ENCODE measurements at regions of chr18 and their contacts with region 1.

Region 1: GRCh38 chr18:63476666-63477065 is at the start of gene SERPINB5:
- DNase-seq: peak; percentile 99
- H3K4me3 Mint-ChIP-seq: peak within 1 kb of the TSS; percentile 95
- H3K27ac Mint-ChIP-seq: peak within 1 kb of the TSS; percentile 99
- H3K4me1 Mint-ChIP-seq: peaks cover 34% of the 10 kb centered on the region
- H3K27me3 Mint-ChIP-seq: no peaks in the 10 kb centered on the region
- CTCF ChIP-seq: no peak
- total RNA-seq, gene SERPINB5: 254 and 330 TPM in 2 replicates

Region 2: GRCh38 chr18:63249771-63250170 is 226.9 kb before region 1 on chr18:
- CTCF ChIA-PET with region 1: no interaction called
- POLR2A ChIA-PET with region 1: no interaction called
- intact Hi-C with region 1: no loop called
- DNase-seq: no peak
- H3K4me3 Mint-ChIP-seq: no peak overlapping the region
- H3K27ac Mint-ChIP-seq: no peak overlapping the region
- H3K4me1 Mint-ChIP-seq: no peaks in the 10 kb centered on the region
- H3K27me3 Mint-ChIP-seq: no peaks in the 10 kb centered on the region
- CTCF ChIP-seq: no peak

Region 3: DNA sequence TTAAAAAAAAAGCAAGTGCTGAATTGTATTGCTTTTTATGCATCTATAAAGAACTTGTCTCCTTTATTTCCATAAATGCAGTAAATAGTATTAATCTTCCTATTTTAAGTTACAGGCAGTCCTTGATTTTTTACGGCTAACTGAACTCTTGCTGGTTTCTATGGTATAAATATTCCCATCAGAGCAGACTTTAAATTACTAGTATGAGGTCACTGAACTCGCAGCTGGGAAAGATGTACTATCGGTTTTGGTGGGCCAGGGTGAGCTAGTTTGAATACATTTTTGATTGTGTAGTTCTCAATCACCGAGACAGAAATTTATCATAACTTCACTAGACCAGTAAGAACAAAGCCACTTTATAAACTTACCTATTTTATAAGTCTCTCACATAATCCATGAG is 88.8 kb before region 1 on chr18:
- CTCF ChIA-PET with region 1: no interaction called
- POLR2A ChIA-PET with region 1: no interaction called
- intact Hi-C with region 1: no loop called
- DNase-seq: no peak
- H3K4me3 Mint-ChIP-seq: no peak overlapping the region
- H3K27ac Mint-ChIP-seq: no peak overlapping the region
- H3K4me1 Mint-ChIP-seq: no peaks in the 10 kb centered on the region
- H3K27me3 Mint-ChIP-seq: no peaks in the 10 kb centered on the region
- CTCF ChIP-seq: no peak

Region 4: DNA sequence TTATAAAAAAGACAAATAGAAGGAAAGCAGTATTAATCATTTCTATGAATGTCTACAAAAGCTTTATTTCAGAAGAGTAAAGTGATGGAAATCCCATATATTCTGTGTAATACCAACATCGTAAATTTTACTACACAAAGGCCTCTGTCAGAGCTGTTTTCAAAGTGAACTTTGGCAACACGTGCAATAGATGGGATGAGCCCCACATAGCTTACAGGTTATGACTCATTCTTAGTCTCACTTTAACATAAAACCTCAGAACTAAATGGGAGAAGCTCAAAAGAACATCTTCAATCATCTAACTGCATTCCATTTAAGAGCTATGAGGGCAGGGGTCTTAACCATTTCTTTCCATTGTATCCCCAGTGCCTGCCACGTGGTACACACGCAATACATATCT is 65.9 kb before region 1 on chr18:
- CTCF ChIA-PET with region 1: no interaction called
- POLR2A ChIA-PET with region 1: interaction called, 10 read pairs
- intact Hi-C with region 1: loop called (anchors 2 kb)
- DNase-seq: peak; percentile 74
- H3K4me3 Mint-ChIP-seq: no peak overlapping the region
- H3K27ac Mint-ChIP-seq: peak overlapping the region; percentile 57
- H3K4me1 Mint-ChIP-seq: peaks cover 25% of the 10 kb centered on the region
- H3K27me3 Mint-ChIP-seq: no peaks in the 10 kb centered on the region
- CTCF ChIP-seq: no peak

Region 5: GRCh38 chr18:63444567-63444966 is 32.1 kb before region 1 on chr18:
- CTCF ChIA-PET with region 1: interaction called, 47 read pairs
- POLR2A ChIA-PET with region 1: interaction called, 863 read pairs
- intact Hi-C with region 1: loop called (anchors 1 kb)
- DNase-seq: peak; percentile 95
- H3K4me3 Mint-ChIP-seq: peak overlapping the region; percentile 46
- H3K27ac Mint-ChIP-seq: peak overlapping the region; percentile 74
- H3K4me1 Mint-ChIP-seq: peaks cover 40% of the 10 kb centered on the region
- H3K27me3 Mint-ChIP-seq: no peaks in the 10 kb centered on the region
- CTCF ChIP-seq: no peak

Region 6: GRCh38 chr18:63457987-63458386 is 18.7 kb before region 1 on chr18:
- CTCF ChIA-PET with region 1: interaction called, 4 read pairs
- POLR2A ChIA-PET with region 1: interaction called, 151 read pairs
- intact Hi-C with region 1: no loop called
- DNase-seq: no peak
- H3K4me3 Mint-ChIP-seq: no peak overlapping the region
- H3K27ac Mint-ChIP-seq: no peak overlapping the region
- H3K4me1 Mint-ChIP-seq: peaks cover 27% of the 10 kb centered on the region
- H3K27me3 Mint-ChIP-seq: no peaks in the 10 kb centered on the region
- CTCF ChIP-seq: no peak

Region 7: GRCh38 chr18:63505566-63506335 is 29.1 kb after region 1 on chr18:
- CTCF ChIA-PET with region 1: interaction called, 4 read pairs
- POLR2A ChIA-PET with region 1: interaction called, 35 read pairs
- intact Hi-C with region 1: no loop called
- DNase-seq: peak; percentile 72
- H3K4me3 Mint-ChIP-seq: no peak overlapping the region
- H3K27ac Mint-ChIP-seq: peak overlapping the region; percentile 77
- H3K4me1 Mint-ChIP-seq: peaks cover 6% of the 10 kb centered on the region
- H3K27me3 Mint-ChIP-seq: no peaks in the 10 kb centered on the region
- CTCF ChIP-seq: peak; percentile 67

Region 8: GRCh38 chr18:63817441-63818051 is 340.9 kb after region 1 on chr18:
- CTCF ChIA-PET with region 1: no interaction called
- POLR2A ChIA-PET with region 1: no interaction called
- intact Hi-C with region 1: no loop called
- DNase-seq: no peak
- H3K4me3 Mint-ChIP-seq: no peak overlapping the region
- H3K27ac Mint-ChIP-seq: no peak overlapping the region
- H3K4me1 Mint-ChIP-seq: peaks cover 19% of the 10 kb centered on the region
- H3K27me3 Mint-ChIP-seq: no peaks in the 10 kb centered on the region
- CTCF ChIP-seq: no peak